K562 (cell line): ENCODE measurements at regions of chr1 and their contacts with region 1.

Region 1: GRCh38 chr1:14435368-14436023 is 163.0 kb upstream of the KAZN start:
- DNase-seq: peak; percentile 84 to 90 (median 87)
- ATAC-seq: peak; percentile 81
- H3K4me3 ChIP-seq: no peak overlapping the region
- H3K27ac ChIP-seq: peak overlapping the region; percentile 83
- H3K4me1 ChIP-seq: peaks cover 32 to 50% of the 10 kb centered on the region in 2 experiments
- H3K27me3 ChIP-seq: no peaks in the 10 kb centered on the region
- CTCF ChIP-seq: peak; percentile 81 to 93 (median 81)
- EP300 ChIP-seq: peak; percentile 90
- POLR2A ChIP-seq: no peak
- RAD21 ChIP-seq: peak; percentile 70 to 83

Region 2: DNA sequence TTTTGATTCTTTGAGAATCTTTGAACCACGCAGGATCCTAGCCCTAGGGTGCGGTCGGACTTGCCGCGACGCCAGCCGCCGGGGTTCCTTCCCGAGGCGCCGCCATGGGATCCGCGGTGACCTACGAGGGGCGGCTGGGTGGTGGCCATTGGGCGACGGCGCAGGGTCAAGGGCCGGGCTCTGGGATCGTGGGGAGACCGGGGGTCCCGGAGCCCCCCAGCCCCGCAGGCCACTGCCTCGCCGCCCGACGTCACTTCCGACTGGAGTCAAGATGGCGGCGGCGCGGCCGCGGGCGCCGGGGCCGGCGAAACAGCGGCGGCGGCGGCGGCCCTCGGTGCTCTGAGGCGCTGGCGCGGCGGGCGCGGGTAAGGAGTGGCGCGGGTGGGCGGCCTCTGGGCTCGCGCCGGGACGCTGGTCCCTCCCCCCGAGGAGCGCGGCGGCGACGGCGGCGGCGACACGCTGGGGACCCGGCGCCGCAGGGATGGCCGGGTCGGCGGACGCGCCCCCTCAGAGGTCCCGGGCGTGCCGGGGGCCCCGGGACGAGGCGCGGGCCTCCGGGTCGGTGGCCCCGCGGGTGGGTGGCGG is 735.5 kb before region 1 on chr1 and contains the start of gene PRDM2:
- CTCF ChIA-PET with region 1: no interaction called
- POLR2A ChIA-PET with region 1: no interaction called
- in situ Hi-C with region 1: no loop called
- intact Hi-C with region 1: no loop called
- DNase-seq: peak; percentile 17 to 68 (median 53)
- ATAC-seq: peak; percentile 71
- H3K4me3 ChIP-seq: peak within 1 kb of the TSS; percentile 35
- H3K27ac ChIP-seq: no peak within 1 kb of the TSS
- H3K4me1 ChIP-seq: peaks cover 0 to 11% of the 10 kb centered on the region in 2 experiments; a peak in 2 of 5 replicates
- H3K27me3 ChIP-seq: peaks cover 25 to 43% of the 10 kb centered on the region in 2 experiments
- CTCF ChIP-seq: no peak
- EP300 ChIP-seq: no peak
- POLR2A ChIP-seq: no peak
- RAD21 ChIP-seq: no peak
- polyA plus RNA-seq, gene PRDM2: 5.4 to 7.1 TPM

Region 3: DNA sequence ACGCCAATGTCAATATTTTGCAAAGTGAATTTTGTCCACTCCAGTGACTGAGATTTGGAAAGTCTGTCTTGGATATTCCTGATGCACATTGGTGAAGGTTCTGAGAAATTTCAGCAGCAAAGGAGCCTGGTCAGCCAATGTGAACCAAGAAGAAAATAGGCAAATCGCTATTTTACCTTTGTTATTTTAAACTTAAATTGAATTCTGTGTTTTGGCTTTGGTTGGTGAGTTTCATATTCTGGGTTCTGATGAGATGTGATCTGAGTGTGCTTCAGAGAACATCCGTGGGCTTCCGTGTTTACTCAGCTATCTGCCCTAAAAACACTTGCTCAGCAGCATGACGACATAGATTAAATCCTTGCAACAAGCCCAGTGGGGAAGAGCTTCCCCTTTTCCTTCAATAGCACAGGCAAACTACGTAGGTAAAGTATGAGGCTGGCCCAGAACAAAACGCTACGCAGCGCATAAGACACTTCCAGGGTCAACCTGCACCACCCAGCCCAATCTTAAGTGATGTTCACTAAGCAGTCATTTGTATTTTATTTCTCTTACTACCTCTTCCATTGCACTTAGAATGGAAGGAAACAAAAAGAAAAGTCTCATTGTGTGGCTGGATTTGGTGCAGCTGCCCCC is 13.4 kb before region 1 on chr1:
- CTCF ChIA-PET with region 1: no interaction called
- POLR2A ChIA-PET with region 1: interaction called, 15 read pairs
- in situ Hi-C with region 1: no loop called
- intact Hi-C with region 1: loop called (anchors 2 kb)
- DNase-seq: peak; percentile 35 to 84 (median 60)
- ATAC-seq: peak; percentile 86
- H3K4me3 ChIP-seq: no peak overlapping the region
- H3K27ac ChIP-seq: peak overlapping the region; percentile 66
- H3K4me1 ChIP-seq: peaks cover 8 to 41% of the 10 kb centered on the region in 2 experiments
- H3K27me3 ChIP-seq: no peaks in the 10 kb centered on the region
- CTCF ChIP-seq: no peak
- EP300 ChIP-seq: peak; percentile 96
- POLR2A ChIP-seq: no peak
- RAD21 ChIP-seq: peak; percentile 8 to 43; a peak in 2 of 4 replicates

Region 4: DNA sequence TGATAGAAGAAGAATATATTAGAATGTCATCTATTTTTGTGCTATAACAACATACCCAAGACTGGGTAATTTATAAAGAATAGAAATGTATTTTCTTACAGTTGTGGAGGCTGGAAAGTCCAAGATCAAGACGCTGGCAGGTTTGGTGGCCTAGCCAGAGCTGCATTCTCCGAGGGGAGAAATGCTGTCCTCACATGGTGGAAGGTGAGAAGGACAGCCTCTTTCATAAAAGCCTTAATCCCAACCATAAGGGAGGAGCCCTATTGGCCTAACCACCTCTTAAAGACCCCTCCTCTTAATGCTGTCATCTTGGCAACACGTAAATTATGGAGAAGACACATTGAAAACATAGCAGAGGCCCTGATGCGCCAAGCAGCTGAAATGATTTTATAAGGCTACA is 102.8 kb after region 1 on chr1:
- CTCF ChIA-PET with region 1: no interaction called
- POLR2A ChIA-PET with region 1: no interaction called
- in situ Hi-C with region 1: no loop called
- intact Hi-C with region 1: loop called (anchors 10 kb)
- DNase-seq: peak; percentile 25 to 36 (median 30)
- ATAC-seq: peak; percentile 82
- H3K4me3 ChIP-seq: no peak overlapping the region
- H3K27ac ChIP-seq: no peak overlapping the region
- H3K4me1 ChIP-seq: peaks cover 0 to 15% of the 10 kb centered on the region in 2 experiments; a peak in 4 of 5 replicates
- H3K27me3 ChIP-seq: no peaks in the 10 kb centered on the region; a peak in 1 of 5 replicates
- CTCF ChIP-seq: peak; percentile 54 to 69 (median 64)
- EP300 ChIP-seq: no peak
- POLR2A ChIP-seq: no peak
- RAD21 ChIP-seq: peak in 1 of 2 experiments; percentile 81; a peak in 3 of 4 replicates

Region 5: DNA sequence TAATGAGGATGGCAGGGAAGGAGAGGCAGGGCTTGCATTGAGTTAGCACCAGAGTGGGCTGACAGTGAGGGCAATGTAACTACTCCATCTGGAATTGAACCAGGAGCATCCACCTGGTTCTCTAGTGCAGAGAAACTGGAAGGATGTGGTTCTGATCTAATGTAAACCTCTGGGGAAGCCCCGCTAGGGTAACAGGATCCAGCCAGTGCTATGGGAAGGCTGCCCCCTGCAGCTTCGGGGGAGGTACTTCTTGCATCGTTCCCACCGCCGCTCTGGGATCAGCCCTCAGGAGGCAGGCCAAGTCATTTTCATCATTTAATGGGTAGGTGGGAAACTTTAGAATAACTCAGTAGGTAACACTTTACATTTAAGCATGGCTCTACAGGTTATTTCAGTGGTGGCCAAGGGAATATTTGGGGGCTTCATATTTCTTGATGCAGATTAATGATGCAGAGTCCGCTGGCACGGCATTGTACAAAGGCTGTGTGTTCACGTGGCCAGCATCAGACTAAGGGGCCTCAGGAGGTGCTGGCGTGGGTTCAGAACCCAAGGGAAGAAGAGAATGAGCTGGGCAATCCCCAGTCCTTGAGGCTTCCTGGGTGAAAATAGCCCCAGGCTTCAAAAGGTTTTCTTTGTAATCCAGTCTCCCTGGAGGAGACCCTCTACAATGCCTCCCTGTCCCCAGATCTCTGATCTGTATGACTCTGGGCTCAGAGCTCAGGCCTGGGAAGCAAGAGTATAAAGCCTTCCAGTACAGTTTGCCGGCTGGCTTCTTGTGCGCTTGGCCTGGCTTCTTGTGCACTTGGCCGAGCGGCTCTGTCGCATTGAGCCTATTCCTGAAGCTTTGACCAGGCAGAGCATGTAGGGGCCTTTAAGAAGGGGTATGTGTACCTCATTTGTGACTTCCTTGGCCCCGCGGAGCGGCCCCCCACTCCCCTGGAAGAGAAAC is 136.6 kb after region 1 on chr1:
- CTCF ChIA-PET with region 1: no interaction called
- POLR2A ChIA-PET with region 1: no interaction called
- in situ Hi-C with region 1: no loop called
- intact Hi-C with region 1: loop called (anchors 5 kb)
- DNase-seq: peak; percentile 48 to 64 (median 62)
- ATAC-seq: peak; percentile 96
- H3K4me3 ChIP-seq: no peak overlapping the region
- H3K27ac ChIP-seq: no peak overlapping the region
- H3K4me1 ChIP-seq: no peaks in the 10 kb centered on the region
- H3K27me3 ChIP-seq: no peaks in the 10 kb centered on the region; a peak in 1 of 5 replicates
- CTCF ChIP-seq: peak; percentile 72 to 87 (median 72)
- EP300 ChIP-seq: no peak
- POLR2A ChIP-seq: no peak
- RAD21 ChIP-seq: peak; percentile 55 to 78

Region 6: DNA sequence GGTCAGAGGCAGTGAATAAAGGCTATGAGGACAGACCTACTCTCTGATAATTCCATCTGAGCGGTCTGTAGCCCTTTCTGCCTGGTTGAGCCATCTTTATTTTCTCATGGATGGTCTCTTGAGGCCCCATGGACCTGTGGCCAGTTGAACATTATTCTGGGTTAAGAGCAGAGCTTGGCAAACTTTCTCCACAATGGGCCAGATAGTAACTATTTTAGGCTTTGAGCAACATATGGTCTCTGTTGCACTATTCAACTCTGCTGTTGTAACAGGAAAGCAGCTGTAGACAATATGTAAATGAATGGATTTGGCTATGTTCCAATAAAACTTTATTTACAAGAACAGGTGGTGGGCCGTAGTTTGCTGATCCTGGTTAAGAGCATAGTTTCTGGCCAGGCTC is 225.7 kb after region 1 on chr1:
- CTCF ChIA-PET with region 1: no interaction called
- POLR2A ChIA-PET with region 1: no interaction called
- in situ Hi-C with region 1: no loop called
- intact Hi-C with region 1: no loop called
- DNase-seq: no peak
- ATAC-seq: no peak
- H3K4me3 ChIP-seq: no peak overlapping the region
- H3K27ac ChIP-seq: no peak overlapping the region
- H3K4me1 ChIP-seq: no peaks in the 10 kb centered on the region
- H3K27me3 ChIP-seq: peaks cover 24 to 52% of the 10 kb centered on the region in 2 experiments
- CTCF ChIP-seq: no peak
- EP300 ChIP-seq: no peak
- POLR2A ChIP-seq: no peak
- RAD21 ChIP-seq: no peak

Region 7: DNA sequence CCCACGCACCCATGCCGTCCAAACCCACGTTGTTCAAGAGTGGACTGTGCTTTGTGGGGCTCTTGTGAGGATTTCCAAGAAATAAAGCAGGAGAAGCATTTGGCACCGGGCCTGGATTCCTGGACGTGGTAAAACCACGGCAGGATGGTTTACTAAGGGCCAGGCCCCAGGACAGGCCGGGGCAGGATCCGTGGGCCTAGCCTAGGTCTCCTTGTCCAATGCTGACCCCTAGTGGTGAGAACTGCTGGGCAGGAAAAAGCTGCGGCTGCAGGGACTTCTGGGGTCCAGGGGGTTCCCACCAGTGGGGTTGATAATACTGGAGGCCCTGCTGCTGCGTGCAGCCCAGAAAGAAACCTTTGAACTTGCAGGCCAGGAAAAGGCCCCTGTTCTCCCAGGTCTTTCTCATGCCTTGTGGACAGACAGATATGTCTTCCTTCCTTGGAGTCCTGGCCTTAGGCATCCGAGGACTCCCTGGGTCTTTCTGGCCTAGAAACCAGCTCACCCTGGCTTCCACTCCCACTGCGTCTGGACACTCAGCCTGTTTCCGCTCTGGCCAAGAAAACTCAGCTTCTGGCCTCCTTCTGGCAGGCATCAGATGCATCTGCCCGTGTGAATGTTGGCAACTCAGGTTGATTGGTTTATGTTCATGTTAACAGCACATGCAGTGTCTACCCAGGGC is 611.1 kb after region 1 on chr1:
- CTCF ChIA-PET with region 1: no interaction called
- POLR2A ChIA-PET with region 1: no interaction called
- in situ Hi-C with region 1: no loop called
- intact Hi-C with region 1: loop called (anchors 2 kb)
- DNase-seq: peak; percentile 83 to 91 (median 88)
- ATAC-seq: peak; percentile 96
- H3K4me3 ChIP-seq: no peak overlapping the region
- H3K27ac ChIP-seq: no peak overlapping the region
- H3K4me1 ChIP-seq: no peaks in the 10 kb centered on the region
- H3K27me3 ChIP-seq: no peaks in the 10 kb centered on the region
- CTCF ChIP-seq: peak; percentile 89 to 96 (median 93)
- EP300 ChIP-seq: no peak
- POLR2A ChIP-seq: no peak
- RAD21 ChIP-seq: peak; percentile 87 to 96